Spleen (tissue), 13 donors: ENCODE measurements at regions of chr17 and their contacts with region 1.

Region 1: DNA sequence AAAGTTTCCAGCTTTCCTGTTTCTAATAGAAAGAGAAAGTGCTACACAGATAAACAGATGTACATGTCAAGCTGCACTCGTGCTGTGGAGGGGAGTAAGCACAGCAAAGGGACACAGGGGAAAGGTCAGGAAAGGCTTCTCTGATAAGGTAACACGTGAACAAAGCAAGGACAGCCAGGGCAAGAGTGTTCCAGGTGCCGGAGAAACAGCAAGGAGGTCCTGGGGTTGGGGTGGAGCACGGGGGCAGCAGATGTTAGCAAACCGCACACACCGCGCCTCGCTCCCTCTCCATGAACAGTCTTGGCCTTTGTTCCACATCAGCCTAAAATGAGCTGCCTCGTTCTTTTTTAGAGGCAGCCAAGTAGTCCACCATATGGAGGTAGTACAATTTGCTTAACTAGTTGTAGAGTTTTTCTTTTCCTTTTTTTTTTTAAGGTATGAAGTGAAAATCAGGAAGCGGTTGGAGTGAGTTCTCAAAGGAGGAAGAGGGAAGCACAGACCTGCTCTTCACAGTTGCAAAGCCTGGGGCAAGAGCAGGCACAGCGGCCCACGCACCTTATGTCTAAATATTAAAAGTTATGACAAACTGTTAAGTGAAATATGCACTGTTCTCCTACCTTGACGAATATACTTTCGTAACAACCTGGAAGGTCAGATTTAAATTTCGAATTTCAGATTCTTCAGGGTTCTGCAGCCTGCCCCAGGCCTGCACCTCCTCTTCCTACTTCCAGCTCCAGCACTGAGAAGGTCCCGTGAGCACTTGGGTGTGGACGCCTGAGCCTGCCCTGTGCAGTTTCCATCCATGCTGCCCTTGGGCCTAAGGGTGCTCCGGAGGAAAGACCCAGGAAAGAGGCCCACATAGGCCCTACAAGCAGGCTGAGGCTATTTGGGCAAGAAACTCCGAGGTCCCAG is 41.5 kb upstream of the RPH3AL start:
- DNase-seq: peak; percentile 45
- H3K4me3 ChIP-seq: peak overlapping the region in 1 of 8 donors; percentile 11
- H3K27ac ChIP-seq: peak overlapping the region in 7 of 8 donors; percentile 2 to 60 (median 14)
- H3K4me1 ChIP-seq: peaks cover 0 to 20% (median 9%) of the 10 kb centered on the region in 6 donors
- H3K27me3 ChIP-seq: peaks cover 0 to 4% (median 0%) of the 10 kb centered on the region in 7 donors
- CTCF ChIP-seq: no peak
- POLR2A ChIP-seq: no peak

Region 2: DNA sequence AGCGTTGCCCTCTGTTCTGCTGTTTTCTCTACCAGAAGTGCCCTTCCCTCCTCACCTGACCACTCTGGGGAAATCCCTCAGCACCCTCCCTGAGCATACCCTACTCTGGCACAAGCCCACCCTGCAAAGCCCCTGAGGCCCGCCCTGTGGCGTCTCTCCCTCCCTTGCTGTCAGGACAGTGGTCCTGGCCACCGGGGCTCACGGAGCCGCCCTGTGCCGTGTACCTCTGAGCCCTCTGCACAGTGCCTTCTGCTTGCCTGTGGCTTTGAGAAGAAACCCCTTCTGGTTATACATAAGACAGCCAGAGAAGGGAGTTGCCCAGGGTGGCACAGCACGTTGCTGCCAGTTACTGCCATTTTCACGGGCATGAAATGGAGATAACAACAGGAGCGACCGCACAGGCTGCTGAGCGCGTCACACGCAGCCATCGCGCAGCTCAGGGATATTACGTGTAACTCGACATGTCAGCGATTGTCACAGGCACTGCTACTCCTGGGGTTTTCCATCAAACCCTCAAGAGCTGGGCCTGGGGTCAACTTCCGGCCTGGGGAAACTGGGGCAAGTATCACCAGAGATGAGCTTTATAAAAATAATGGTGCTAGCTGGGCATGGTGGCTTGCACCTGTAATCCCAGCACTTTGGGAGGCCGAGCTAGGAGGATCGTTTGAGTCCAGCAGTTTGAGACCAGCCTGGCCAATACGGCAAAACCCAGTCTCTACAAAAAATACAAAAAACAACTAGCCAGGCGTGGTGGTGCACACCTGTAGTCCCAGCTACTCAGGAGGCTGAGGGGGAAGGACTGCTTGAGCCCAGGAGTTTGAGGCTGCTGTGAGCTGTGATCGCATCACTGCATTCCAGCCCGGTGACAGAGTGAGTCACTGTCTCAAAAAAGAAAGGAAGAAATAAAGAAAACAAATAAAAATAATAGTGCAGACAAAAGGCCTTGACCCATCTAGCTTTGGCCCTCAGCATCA is 241.9 kb before region 1 on chr17:
- intact Hi-C with region 1: loop called (anchors 5 kb)
- DNase-seq: peak; percentile 35
- H3K4me3 ChIP-seq: no peak overlapping the region
- H3K27ac ChIP-seq: no peak overlapping the region
- H3K4me1 ChIP-seq: peaks cover 0 to 13% (median 3%) of the 10 kb centered on the region in 6 donors
- H3K27me3 ChIP-seq: no peaks in the 10 kb centered on the region
- CTCF ChIP-seq: no peak
- POLR2A ChIP-seq: no peak

Region 3: GRCh38 chr17:282000-282911 is 111.8 kb before region 1 on chr17:
- intact Hi-C with region 1: no loop called
- DNase-seq: peak; percentile 16
- H3K4me3 ChIP-seq: no peak overlapping the region
- H3K27ac ChIP-seq: peak overlapping the region in 1 of 8 donors; percentile 79
- H3K4me1 ChIP-seq: peaks cover 0 to 28% (median 7%) of the 10 kb centered on the region in 6 donors
- H3K27me3 ChIP-seq: no peaks in the 10 kb centered on the region
- CTCF ChIP-seq: no peak
- POLR2A ChIP-seq: no peak

Region 4: DNA sequence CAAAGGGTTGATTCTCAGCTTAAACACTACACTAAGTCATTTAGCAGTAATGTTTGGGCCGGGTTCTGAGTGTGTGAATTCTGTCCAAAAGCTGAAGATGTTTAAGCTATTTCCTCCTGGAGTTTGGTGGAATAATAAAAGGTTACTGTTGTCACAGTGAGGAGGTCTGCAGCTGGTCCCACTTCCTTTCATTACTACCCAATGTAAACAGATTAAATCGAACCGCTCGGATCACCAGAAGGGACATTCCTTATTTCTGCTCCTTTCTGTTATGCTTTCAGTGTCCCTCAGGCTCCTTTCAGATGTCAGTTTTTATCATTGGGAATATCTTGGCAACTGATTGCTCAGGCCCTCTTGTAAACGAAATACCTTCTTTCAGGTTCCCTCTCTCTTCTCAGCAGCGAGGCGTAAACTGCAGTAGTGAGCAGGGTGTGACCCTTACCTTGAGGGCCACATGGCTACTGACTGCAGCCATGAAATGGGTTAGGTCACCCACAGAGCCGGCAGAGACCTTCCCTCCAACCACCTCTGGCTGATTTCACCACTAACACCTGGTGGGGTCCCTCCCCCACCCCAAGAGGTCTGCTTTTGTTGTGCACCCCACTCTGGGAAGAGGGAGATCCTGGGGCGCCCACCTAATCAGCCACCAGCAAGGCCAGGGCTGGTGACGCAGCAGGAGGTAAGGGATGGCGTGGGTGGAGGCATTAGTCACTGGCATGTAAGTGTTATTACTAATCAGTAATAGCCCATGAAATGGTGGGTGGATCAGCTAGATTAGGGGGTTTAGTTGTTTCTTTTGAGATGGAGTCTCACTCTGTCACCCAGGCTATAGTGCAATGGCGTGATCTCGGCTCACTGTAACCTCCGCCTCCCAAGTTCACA is 202.9 kb after region 1 on chr17:
- intact Hi-C with region 1: no loop called
- DNase-seq: no peak
- H3K4me3 ChIP-seq: no peak overlapping the region
- H3K27ac ChIP-seq: no peak overlapping the region
- H3K4me1 ChIP-seq: peaks cover 0 to 38% (median 10%) of the 10 kb centered on the region in 6 donors
- H3K27me3 ChIP-seq: no peaks in the 10 kb centered on the region
- CTCF ChIP-seq: no peak
- POLR2A ChIP-seq: no peak